Activated CD4-positive, alpha-beta T cell treated with anti-CD3 and anti-CD28 coated beads for 36 hours (primary cell): ENCODE measurements at regions of chr10 and their contacts with region 1.

Region 1: DNA sequence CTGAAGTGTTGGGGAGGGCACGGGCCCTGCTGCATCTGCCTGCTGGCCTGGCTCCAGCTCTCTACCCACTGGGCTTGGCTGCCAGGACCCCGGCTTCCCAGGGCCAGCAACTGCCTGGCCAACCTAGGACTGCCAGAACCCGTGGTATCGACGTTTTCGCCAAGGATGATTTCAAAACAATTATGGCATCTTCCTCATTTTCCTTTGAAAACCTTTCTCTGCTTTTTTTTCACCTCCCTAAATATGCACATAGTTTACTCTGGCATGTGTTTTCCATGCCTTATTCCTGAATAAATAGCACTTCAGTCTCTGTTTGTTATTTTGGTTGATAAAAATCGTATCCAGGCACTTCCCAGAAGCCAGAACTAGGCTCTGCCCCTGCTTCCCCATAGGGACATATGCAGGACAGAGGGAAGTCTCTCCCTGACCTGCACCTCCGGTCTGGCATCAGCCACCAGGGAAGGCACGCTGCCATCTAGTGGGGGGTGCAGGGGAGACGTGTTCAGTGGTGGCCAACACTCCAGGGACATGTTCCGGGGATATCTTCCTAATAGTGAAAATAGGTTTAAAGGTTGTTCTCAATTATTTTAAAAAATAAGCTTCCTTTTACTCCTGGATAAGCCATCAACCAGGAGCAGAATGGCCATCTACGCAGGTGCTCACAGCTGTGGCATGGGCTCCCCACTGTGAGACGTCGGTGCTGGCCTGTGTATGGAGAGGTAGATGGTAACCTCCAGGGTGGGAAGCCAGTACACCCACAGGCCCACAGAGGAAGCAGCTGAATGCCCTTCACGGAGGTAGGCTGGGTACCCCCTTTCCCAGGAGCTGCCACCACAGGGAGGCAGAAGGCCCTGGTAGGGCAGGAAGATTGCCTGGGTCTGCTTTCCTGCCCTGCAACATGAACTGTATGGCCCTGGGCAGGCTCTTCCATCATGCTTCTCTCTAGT is 30.7 kb upstream of the ANTXRL start:
- DNase-seq: peak; percentile 83
- ATAC-seq: peak; percentile 92
- H3K4me3 Mint-ChIP-seq: no peak overlapping the region
- H3K27ac Mint-ChIP-seq: peak overlapping the region; percentile 51
- H3K4me1 Mint-ChIP-seq: peaks cover 38% of the 10 kb centered on the region
- H3K27me3 Mint-ChIP-seq: no peaks in the 10 kb centered on the region

Region 2: DNA sequence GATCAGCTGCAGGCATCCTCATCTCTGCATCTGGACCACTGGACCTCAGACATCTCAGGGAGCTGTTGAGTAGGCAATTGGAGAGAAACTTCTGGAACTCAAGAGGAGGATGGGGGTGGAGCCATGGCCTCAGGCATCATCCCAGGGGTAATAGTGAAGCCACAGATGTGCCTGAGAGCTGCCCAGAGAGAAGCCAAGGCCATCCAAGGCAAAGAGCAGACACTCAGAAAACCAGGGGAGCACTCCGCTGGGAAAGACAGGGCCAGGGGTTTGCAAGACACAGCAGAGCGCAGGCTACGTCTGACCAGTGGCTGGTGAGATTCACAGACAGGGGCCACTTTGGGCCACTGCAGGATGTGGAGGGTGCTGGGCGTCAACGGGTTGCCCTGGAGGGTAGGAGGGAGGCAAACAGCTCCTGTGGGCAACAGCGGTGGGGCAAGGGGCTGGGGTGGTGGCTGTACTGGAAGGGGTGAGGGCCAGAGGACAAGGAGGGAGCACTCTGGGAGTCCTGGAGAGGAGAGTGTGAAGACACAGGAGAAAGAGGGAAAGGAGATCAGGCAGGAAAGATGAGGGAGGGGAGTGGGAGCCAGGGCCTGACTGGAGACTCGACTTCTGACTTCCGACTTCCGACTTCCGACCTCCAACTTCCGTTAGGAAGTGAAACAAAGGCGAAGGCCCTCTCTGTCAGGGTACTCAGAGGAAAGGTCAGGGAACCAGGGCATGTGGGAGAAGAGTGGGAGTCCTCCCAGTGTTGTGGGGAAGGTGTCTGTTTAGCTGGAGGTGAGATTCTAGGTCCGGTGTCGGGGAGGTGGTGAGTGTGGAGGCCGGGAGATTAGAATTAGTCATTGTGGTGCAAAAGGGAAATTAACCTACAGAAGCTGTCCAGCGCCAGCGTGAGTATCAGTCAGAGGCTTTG is 39.0 kb before region 1 on chr10:
- CTCF ChIA-PET with region 1: no interaction called
- POLR2A ChIA-PET with region 1: no interaction called
- intact Hi-C with region 1: no loop called
- DNase-seq: no peak
- ATAC-seq: peak; percentile 55
- H3K4me3 Mint-ChIP-seq: no peak overlapping the region
- H3K27ac Mint-ChIP-seq: no peak overlapping the region
- H3K4me1 Mint-ChIP-seq: no peaks in the 10 kb centered on the region
- H3K27me3 Mint-ChIP-seq: no peaks in the 10 kb centered on the region

Region 3: GRCh38 chr10:46228563-46229071 is 27.5 kb before region 1 on chr10:
- CTCF ChIA-PET with region 1: interaction called, 16 read pairs
- POLR2A ChIA-PET with region 1: no interaction called
- intact Hi-C with region 1: loop called (anchors 1 kb)
- DNase-seq: peak; percentile 85
- ATAC-seq: peak; percentile 92
- H3K4me3 Mint-ChIP-seq: no peak overlapping the region
- H3K27ac Mint-ChIP-seq: no peak overlapping the region
- H3K4me1 Mint-ChIP-seq: peaks cover 6% of the 10 kb centered on the region
- H3K27me3 Mint-ChIP-seq: no peaks in the 10 kb centered on the region

Region 4: GRCh38 chr10:46240684-46241565 is 15.1 kb before region 1 on chr10:
- CTCF ChIA-PET with region 1: interaction called, 4 read pairs
- POLR2A ChIA-PET with region 1: interaction called, 3 read pairs
- intact Hi-C with region 1: loop called in 1 of 2 experiments (anchors 1 kb)
- DNase-seq: no peak
- ATAC-seq: no peak
- H3K4me3 Mint-ChIP-seq: no peak overlapping the region
- H3K27ac Mint-ChIP-seq: no peak overlapping the region
- H3K4me1 Mint-ChIP-seq: peaks cover 22% of the 10 kb centered on the region
- H3K27me3 Mint-ChIP-seq: no peaks in the 10 kb centered on the region

Region 5: DNA sequence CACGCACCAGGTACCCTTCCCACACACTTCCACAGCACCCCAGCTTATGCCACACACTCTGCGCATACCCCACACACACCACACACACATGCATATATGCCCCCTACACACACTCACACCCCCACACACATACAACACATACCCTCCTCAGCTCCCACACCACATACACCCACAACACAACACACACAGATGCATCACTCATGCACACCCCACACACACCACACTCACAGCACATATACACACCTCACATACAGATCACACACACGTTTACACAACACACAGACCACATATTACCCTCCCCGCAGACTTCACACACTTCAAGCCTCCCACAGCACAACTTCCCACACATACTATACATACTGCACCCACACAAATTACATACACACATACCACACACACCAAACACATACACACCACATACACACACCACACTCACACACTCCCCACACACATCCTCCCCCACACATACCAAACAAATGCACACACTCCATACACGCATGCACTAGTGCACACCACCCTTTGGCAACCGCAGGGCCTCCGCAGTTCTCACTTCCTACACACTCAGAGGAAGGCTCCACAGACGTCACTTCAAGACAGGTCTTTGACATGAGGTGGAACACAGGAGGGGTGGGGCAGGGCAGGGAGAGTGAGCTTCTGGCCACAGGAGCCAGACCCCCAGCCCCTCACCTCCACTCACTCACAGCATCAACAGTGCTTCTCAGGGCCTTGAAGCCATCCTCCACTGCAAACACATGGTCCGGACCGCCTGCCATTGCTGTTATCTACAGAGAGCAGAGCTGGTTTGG is 12.2 kb after region 1 on chr10:
- CTCF ChIA-PET with region 1: interaction called, 12 read pairs
- POLR2A ChIA-PET with region 1: no interaction called
- intact Hi-C with region 1: no loop called
- DNase-seq: peak; percentile 87
- ATAC-seq: peak; percentile 80
- H3K4me3 Mint-ChIP-seq: no peak overlapping the region
- H3K27ac Mint-ChIP-seq: no peak overlapping the region
- H3K4me1 Mint-ChIP-seq: peaks cover 25% of the 10 kb centered on the region
- H3K27me3 Mint-ChIP-seq: no peaks in the 10 kb centered on the region

Region 6: GRCh38 chr10:46311501-46312441 is 55.7 kb after region 1 on chr10:
- CTCF ChIA-PET with region 1: no interaction called
- POLR2A ChIA-PET with region 1: no interaction called
- intact Hi-C with region 1: loop called in 1 of 2 experiments (anchors 2 kb)
- DNase-seq: no peak
- ATAC-seq: no peak
- H3K4me3 Mint-ChIP-seq: no peak overlapping the region
- H3K27ac Mint-ChIP-seq: no peak overlapping the region
- H3K4me1 Mint-ChIP-seq: no peaks in the 10 kb centered on the region
- H3K27me3 Mint-ChIP-seq: no peaks in the 10 kb centered on the region